Activated naive CD4-positive, alpha-beta T cell treated with anti-CD3 and anti-CD28 coated beads for 36 hours (primary cell): ENCODE measurements at regions of chr6 and their contacts with region 1.

Region 1: DNA sequence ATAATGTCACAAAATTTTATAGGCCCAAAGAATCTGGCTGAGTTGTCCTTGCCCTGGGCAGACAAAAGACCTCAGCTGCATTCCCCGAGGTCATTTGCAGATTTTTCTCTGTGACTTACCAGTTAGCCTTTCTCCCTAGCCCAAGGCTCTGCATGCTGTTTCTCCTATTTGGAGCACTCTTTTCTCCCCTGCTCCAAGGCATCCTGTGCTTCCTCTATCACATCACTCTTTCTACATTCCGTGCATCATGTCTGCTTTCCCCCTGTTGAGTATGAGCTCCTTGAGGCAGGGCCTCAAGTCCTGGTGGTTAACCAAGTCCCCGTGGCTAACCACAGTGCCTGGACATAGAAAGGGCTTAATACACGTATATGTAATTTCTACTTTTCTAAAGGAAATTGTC is 593 bp upstream of the GSTA3 start:
- DNase-seq: no peak
- H3K4me3 Mint-ChIP-seq: no peak overlapping the region
- H3K27ac Mint-ChIP-seq: no peak overlapping the region
- H3K4me1 Mint-ChIP-seq: no peaks in the 10 kb centered on the region
- H3K27me3 Mint-ChIP-seq: no peaks in the 10 kb centered on the region

Region 2: GRCh38 chr6:52731719-52732118 is 178.4 kb before region 1 on chr6:
- CTCF ChIA-PET with region 1: no interaction called
- intact Hi-C with region 1: no loop called
- DNase-seq: no peak
- H3K4me3 Mint-ChIP-seq: no peak overlapping the region
- H3K27ac Mint-ChIP-seq: no peak overlapping the region
- H3K4me1 Mint-ChIP-seq: no peaks in the 10 kb centered on the region
- H3K27me3 Mint-ChIP-seq: no peaks in the 10 kb centered on the region

Region 3: GRCh38 chr6:52872031-52872430 is 38.1 kb before region 1 on chr6:
- CTCF ChIA-PET with region 1: no interaction called
- intact Hi-C with region 1: no loop called
- DNase-seq: no peak
- H3K4me3 Mint-ChIP-seq: no peak overlapping the region
- H3K27ac Mint-ChIP-seq: no peak overlapping the region
- H3K4me1 Mint-ChIP-seq: no peaks in the 10 kb centered on the region
- H3K27me3 Mint-ChIP-seq: no peaks in the 10 kb centered on the region

Region 4: DNA sequence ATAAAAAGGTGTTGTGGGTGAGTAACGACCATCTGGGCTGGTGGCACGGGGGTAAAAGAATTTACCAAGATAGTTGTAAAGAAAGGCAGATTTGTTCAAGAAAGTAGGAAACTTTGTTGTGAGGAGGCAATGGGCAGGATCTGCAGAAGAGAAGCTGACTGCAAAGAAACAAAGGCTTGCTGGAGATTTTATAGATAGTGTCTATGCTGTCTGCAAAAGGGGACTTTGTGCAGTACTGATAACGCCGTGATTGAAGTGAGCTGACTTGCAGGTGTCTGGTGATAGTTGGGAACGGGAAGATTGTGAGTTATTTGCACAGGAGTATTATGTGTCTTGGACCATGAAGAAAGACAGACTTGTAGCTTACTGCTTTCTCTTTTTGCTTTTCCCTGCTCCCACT is 36.2 kb after region 1 on chr6:
- CTCF ChIA-PET with region 1: no interaction called
- intact Hi-C with region 1: loop called (anchors 2 kb)
- DNase-seq: no peak
- H3K4me3 Mint-ChIP-seq: no peak overlapping the region
- H3K27ac Mint-ChIP-seq: no peak overlapping the region
- H3K4me1 Mint-ChIP-seq: peaks cover 6% of the 10 kb centered on the region
- H3K27me3 Mint-ChIP-seq: peaks cover 20% of the 10 kb centered on the region